Activated CD4-positive, alpha-beta T cell treated with anti-CD3 and anti-CD28 coated beads, Interleukin-2, amount 10 ng/mL, durations not matched to agents 24 days and 14 days (primary cell): ENCODE measurements at regions of chr5 and their contacts with region 1.

Region 1: GRCh38 chr5:53089345-53089991 is 20.1 kb downstream of the MOCS2 start:
- DNase-seq: peak; percentile 77
- H3K4me3 Mint-ChIP-seq: peak overlapping the region; percentile 45
- H3K27ac Mint-ChIP-seq: peak overlapping the region; percentile 42
- H3K4me1 Mint-ChIP-seq: peaks cover 38% of the 10 kb centered on the region
- H3K27me3 Mint-ChIP-seq: no peaks in the 10 kb centered on the region

Region 2: GRCh38 chr5:52948418-52949076 is 140.9 kb before region 1 on chr5:
- intact Hi-C with region 1: no loop called
- DNase-seq: peak; percentile 92
- H3K4me3 Mint-ChIP-seq: no peak overlapping the region
- H3K27ac Mint-ChIP-seq: peak overlapping the region; percentile 46
- H3K4me1 Mint-ChIP-seq: peaks cover 19% of the 10 kb centered on the region
- H3K27me3 Mint-ChIP-seq: peaks cover 1% of the 10 kb centered on the region

Region 3: GRCh38 chr5:53031695-53032096 is 57.8 kb before region 1 on chr5:
- intact Hi-C with region 1: loop called (anchors 2 kb)
- DNase-seq: peak; percentile 86
- H3K4me3 Mint-ChIP-seq: peak overlapping the region; percentile 53
- H3K27ac Mint-ChIP-seq: peak overlapping the region; percentile 80
- H3K4me1 Mint-ChIP-seq: peaks cover 57% of the 10 kb centered on the region
- H3K27me3 Mint-ChIP-seq: no peaks in the 10 kb centered on the region

Region 4: GRCh38 chr5:53041071-53041692 is 48.3 kb before region 1 on chr5:
- intact Hi-C with region 1: loop called (anchors 1 kb)
- DNase-seq: peak; percentile 81
- H3K4me3 Mint-ChIP-seq: peak overlapping the region; percentile 76
- H3K27ac Mint-ChIP-seq: peak overlapping the region; percentile 82
- H3K4me1 Mint-ChIP-seq: peaks cover 65% of the 10 kb centered on the region
- H3K27me3 Mint-ChIP-seq: no peaks in the 10 kb centered on the region

Region 5: DNA sequence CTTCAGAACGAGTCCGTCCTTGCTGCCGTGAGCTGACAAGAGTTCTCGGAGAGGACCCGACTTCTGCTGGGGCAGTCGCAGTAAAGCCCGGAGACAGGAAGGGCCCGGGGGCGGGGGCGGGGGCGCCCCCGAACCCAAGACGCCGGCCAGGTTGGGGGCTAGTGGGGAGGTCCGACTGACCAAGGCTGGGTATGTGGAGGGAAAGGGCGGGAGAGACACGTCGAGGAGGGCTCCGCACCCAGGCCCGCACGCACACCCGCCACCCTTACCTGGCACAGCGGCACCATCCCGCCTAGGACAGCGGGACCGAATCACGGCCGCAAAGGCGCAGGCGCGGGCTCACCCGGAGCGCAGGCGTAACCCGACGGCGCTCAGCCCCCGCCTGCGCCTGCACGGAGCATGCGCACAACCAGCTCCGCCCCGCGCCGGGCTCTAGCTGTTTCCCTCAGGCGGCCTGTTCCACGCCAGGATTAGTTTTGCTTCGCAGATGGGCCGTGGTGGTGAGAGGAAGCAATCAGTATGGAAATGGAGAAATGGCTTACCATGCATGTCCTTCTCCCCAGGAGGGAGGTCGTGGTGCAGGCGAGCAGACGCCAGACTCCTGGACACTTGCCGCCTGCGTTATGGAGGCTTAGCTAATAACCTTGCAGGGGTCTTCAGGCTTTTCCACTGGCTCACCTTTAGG is 20.1 kb after region 1 on chr5 and contains the start of gene MOCS2:
- intact Hi-C with region 1: loop called (anchors 2 kb)
- DNase-seq: peak; percentile 98
- H3K4me3 Mint-ChIP-seq: peak within 1 kb of the TSS; percentile 91
- H3K27ac Mint-ChIP-seq: peak within 1 kb of the TSS; percentile 89
- H3K4me1 Mint-ChIP-seq: peaks cover 31% of the 10 kb centered on the region
- H3K27me3 Mint-ChIP-seq: no peaks in the 10 kb centered on the region
- total RNA-seq, gene MOCS2: 16.5 and 18.4 TPM in 2 replicates